ENCODE measurements at regions of chr22 and their contacts with region 1.

Region 1: GRCh38 chr22:45226527-45227186 is 14.0 kb downstream of the KIAA0930 start:
- DNase-seq: peak; percentile 64
- H3K4me3 ChIP-seq: no peak overlapping the region
- H3K27ac ChIP-seq: peak overlapping the region; percentile 45
- H3K4me1 ChIP-seq: peaks cover 42% of the 10 kb centered on the region
- H3K27me3 ChIP-seq: no peaks in the 10 kb centered on the region
- CTCF ChIP-seq: no peak

Region 2: GRCh38 chr22:45125188-45125587 is 101.5 kb before region 1 on chr22:
- CTCF ChIA-PET with region 1: no interaction called
- dilution Hi-C with region 1: loop called (anchors 5 kb)
- in situ Hi-C with region 1: no loop called
- intact Hi-C with region 1: no loop called
- DNase-seq: no peak
- H3K4me3 ChIP-seq: no peak overlapping the region
- H3K27ac ChIP-seq: no peak overlapping the region
- H3K4me1 ChIP-seq: peaks cover 8% of the 10 kb centered on the region
- H3K27me3 ChIP-seq: no peaks in the 10 kb centered on the region
- CTCF ChIP-seq: no peak

Region 3: DNA sequence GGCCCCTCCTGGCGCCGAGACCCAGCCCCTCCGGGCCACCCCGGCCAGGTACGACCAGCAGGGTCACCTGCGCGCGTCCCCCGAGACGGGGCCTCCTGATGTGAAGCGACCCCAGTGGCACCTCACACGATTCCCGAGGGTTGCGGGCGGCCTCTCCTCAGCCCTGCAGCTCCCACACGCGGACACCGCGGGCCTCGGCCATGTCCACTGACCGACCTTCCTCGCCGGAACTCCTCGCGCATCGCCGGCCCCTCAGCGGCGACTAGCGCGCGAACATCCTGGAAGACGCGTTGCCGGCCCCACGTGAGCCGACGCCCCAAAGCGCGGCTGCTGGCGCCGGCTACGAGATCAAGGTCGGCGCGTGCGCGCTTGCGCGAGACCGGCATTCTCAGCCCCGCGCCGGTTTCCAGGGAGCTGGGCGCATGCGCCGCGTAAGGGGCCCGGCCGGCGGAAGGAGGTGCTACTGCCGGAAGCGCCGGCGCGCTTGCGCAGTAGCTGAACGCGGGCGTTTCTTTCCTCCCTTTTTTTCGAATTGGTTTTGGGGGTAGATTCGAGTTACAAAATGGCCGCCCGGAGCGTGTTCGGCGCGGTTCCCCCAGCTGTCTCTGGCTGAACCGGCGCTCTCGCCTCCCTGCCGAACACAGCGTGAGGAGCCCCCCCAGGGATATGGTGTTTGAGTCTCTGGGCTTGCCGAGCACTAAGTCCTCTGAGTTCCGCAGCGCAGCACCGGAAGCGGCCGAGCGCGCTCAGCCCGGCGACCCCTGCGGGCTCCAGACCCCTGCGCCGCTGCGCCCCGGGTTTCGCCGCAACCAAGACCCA is 63.0 kb before region 1 on chr22 and contains the start of gene NUP50:
- CTCF ChIA-PET with region 1: no interaction called
- dilution Hi-C with region 1: no loop called
- in situ Hi-C with region 1: no loop called
- intact Hi-C with region 1: no loop called
- DNase-seq: peak; percentile 96
- H3K4me3 ChIP-seq: peak within 1 kb of the TSS; percentile 78 to 96 (median 91)
- H3K27ac ChIP-seq: peak within 1 kb of the TSS; percentile 98
- H3K4me1 ChIP-seq: peaks cover 30% of the 10 kb centered on the region
- H3K27me3 ChIP-seq: no peaks in the 10 kb centered on the region
- CTCF ChIP-seq: peak in 1 of 2 donors; percentile 18
- total RNA-seq, gene NUP50: 33.7 to 81.5 TPM

Region 4: GRCh38 chr22:45179276-45180044 is 47.2 kb before region 1 on chr22:
- CTCF ChIA-PET with region 1: no interaction called
- dilution Hi-C with region 1: loop called (anchors 5 kb)
- in situ Hi-C with region 1: no loop called
- intact Hi-C with region 1: no loop called
- DNase-seq: no peak
- H3K4me3 ChIP-seq: no peak overlapping the region
- H3K27ac ChIP-seq: no peak overlapping the region
- H3K4me1 ChIP-seq: no peaks in the 10 kb centered on the region
- H3K27me3 ChIP-seq: no peaks in the 10 kb centered on the region
- CTCF ChIP-seq: no peak

Region 5: DNA sequence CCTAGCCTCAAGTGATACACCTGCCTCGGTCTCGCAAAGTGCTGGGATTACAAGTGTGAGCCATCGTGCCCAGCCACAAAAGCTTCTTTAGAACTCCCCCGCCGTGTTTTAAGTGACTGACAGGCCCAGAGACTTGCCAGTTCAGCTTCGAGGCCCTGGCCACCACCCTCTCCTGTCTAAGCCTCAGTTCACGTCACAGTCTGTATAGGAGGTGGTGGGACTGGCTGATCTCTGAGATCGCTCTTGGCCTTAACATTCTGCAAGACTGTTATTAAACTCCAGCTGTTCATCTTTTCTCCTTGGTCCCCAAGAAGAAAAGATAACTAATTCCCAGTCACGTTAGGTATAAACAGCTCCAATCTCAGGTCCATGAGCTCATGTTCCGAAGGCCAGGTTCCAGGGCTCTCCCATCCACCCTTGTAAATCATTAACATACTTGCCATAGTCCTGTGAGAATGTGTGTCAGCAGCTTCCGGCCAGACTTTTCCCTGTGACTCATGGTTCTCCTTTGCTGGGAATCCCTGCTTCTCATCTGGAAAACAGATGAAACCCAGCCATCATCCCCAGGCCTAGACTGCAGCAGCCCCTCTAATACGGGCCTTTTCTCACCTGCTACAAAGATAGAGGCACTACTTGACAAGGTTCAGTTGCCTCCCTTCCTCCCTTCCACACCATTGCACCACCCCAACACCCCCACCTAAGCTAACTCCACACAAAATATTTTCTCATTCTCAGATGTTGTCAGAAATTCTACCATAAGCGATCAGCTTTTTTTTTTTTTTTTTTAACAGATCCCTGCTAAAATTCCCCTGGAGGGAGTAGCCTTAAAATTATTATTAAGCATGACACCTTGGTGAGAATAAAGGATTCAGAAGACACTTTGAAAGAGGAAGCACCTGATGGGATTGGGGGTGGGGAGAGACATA is 19.7 kb after region 1 on chr22:
- CTCF ChIA-PET with region 1: no interaction called
- dilution Hi-C with region 1: no loop called
- in situ Hi-C with region 1: no loop called
- intact Hi-C with region 1: loop called (anchors 2 kb)
- DNase-seq: peak; percentile 89
- H3K4me3 ChIP-seq: peak overlapping the region in 1 of 3 experiments; percentile 16
- H3K27ac ChIP-seq: peak overlapping the region; percentile 97
- H3K4me1 ChIP-seq: peaks cover 20% of the 10 kb centered on the region
- H3K27me3 ChIP-seq: no peaks in the 10 kb centered on the region
- CTCF ChIP-seq: no peak